Astrocyte of the cerebellum (primary cell): ENCODE measurements at regions of chr14 and their contacts with region 1.

Region 1: GRCh38 chr14:76067536-76067935 is 82.0 kb downstream of the IFT43 start:
- DNase-seq: no peak
- H3K4me3 ChIP-seq: no peak overlapping the region
- CTCF ChIP-seq: no peak

Region 2: GRCh38 chr14:76115010-76115422 is 47.5 kb after region 1 on chr14:
- in situ Hi-C with region 1: no loop called
- DNase-seq: no peak
- H3K4me3 ChIP-seq: no peak overlapping the region
- CTCF ChIP-seq: no peak

Region 3: DNA sequence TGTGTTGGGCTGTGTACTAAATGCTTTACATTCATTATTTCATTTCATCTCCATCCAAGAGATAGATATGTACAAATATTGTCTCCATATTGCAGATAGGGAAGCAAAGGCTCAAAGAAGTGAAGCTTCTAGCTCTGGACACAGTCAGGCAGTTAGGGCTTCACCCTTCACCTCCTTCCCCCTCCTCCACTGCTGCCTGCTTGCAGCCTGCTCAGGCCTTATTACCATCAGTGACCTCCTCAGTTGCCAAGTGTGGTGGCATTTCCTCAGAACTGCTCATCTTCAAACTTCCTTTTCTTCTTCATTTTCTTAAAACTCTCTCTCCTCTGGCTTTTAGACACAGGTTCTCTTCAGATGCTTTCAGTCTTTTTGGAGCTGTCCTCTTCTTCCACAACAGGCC is 79.4 kb after region 1 on chr14:
- in situ Hi-C with region 1: loop called (anchors 10 kb)
- DNase-seq: no peak
- H3K4me3 ChIP-seq: no peak overlapping the region
- CTCF ChIP-seq: no peak

Region 4: GRCh38 chr14:76473481-76474263 is 406.1 kb after region 1 on chr14:
- in situ Hi-C with region 1: no loop called
- DNase-seq: no peak
- H3K4me3 ChIP-seq: no peak overlapping the region
- CTCF ChIP-seq: peak; percentile 5